Activated B cell treated with CpG ODN at 0.5 μM for 24 hours (primary cell): ENCODE measurements at regions of chr4 and their contacts with region 1.

Region 1: GRCh38 chr4:83012687-83013419 is 2.2 kb upstream of the LIN54 start:
- DNase-seq: peak; percentile 97
- ATAC-seq: peak; percentile 92
- H3K4me3 Mint-ChIP-seq: peak overlapping the region; percentile 94
- H3K27ac Mint-ChIP-seq: peak overlapping the region; percentile 92
- H3K4me1 Mint-ChIP-seq: peaks cover 44% of the 10 kb centered on the region
- H3K27me3 Mint-ChIP-seq: no peaks in the 10 kb centered on the region
- CTCF ChIP-seq: no peak

Region 2: GRCh38 chr4:82890901-82891706 is 121.7 kb before region 1 on chr4 and contains the start of gene SEC31A:
- CTCF ChIA-PET with region 1: interaction called, 3 read pairs
- POLR2A ChIA-PET with region 1: interaction called, 5 read pairs
- intact Hi-C with region 1: loop called (anchors 1 kb)
- DNase-seq: peak; percentile 97
- ATAC-seq: peak; percentile 92
- H3K4me3 Mint-ChIP-seq: peak within 1 kb of the TSS; percentile 93
- H3K27ac Mint-ChIP-seq: peak within 1 kb of the TSS; percentile 94
- H3K4me1 Mint-ChIP-seq: peaks cover 34% of the 10 kb centered on the region
- H3K27me3 Mint-ChIP-seq: no peaks in the 10 kb centered on the region
- CTCF ChIP-seq: no peak
- total RNA-seq, gene SEC31A: 154 and 172 TPM in 2 replicates

Region 3: DNA sequence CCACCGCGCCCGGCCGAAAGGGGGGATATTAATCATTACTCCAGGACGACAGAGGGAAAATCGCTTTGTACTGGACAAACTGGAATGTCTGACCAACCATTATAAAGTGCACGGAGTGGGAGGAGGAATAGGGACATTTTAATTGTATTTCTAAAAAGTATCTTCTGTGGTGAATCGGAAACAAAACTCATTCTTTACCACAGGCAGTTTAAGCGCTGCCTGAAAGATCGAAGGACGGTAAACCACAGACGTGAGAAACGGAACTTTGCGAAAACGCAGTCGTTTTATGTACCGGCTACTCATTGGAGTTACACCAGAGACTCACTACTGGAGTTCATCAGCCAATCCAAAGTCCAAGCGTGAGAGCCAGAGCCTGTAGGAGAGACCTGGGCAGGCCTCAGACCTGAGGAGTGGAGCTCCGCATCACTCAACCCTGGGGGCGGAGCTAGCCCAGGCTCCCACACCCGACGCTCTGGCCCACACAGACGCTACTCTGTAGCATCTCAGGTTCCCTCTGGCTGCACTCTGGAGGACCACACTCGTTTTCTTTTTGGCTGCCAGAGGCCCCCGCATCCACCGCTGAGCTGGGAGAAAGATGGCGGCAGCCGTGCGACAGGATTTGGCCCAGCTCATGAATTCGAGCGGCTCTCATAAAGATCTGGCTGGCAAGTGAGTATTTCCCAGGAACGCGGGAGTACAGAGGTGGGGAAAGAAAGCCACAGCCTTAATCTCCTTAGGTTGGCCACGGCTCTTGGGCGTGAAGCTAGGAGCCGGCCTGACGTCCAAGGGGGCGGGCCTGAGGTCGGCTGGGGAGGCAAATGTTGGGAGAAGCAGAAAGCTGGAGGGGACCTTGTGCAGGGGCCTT is 22.0 kb after region 1 on chr4 and contains the start of gene COPS4:
- CTCF ChIA-PET with region 1: interaction called, 6 read pairs
- POLR2A ChIA-PET with region 1: interaction called, 63 read pairs
- intact Hi-C with region 1: loop called (anchors 1 kb)
- DNase-seq: peak; percentile 82
- ATAC-seq: peak; percentile 96
- H3K4me3 Mint-ChIP-seq: peak within 1 kb of the TSS; percentile 99
- H3K27ac Mint-ChIP-seq: peak within 1 kb of the TSS; percentile 100
- H3K4me1 Mint-ChIP-seq: peaks cover 31% of the 10 kb centered on the region
- H3K27me3 Mint-ChIP-seq: no peaks in the 10 kb centered on the region
- CTCF ChIP-seq: no peak
- total RNA-seq, gene COPS4: 32.7 and 36.7 TPM in 2 replicates

Region 4: DNA sequence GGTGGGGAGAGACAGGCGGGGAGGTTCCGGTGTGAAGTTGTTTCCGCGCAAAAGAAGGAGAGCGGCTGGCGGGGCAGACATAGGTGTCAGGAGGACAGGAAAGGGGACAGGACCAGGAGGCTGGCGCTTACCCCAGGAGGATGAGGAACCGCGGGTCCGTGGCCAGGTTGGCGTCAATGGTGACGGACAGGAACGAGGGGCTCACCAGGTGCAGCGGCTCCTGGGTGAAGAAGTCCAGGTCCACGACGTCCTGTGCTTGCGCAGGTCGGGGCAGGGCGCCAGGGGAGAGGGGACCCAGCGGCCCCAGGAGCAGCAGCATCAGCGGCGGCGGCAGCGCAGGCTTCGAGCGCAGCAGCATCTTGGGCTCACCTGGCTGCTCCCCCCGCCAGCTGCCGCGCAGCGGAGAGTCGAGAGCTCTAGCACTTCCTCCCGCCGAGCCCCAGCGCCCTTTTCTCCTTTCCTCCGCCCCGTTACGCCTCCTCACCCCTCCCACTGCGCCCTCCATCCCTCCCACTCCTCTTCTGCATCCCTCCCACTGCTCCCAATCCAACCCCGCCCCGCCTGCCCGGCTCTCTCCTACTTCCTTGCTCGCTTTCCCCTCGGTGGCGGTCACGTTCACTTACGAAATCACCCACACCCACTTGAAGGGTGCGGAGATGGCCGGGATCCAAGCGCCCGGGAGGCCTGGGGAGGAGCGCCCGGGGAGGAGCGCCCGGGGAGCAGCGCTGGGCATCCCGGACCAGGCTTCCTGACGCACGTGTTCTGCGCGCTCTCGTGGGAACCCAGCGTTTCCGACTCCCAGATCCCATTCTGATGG is 321.8 kb after region 1 on chr4 and contains the start of gene HPSE:
- CTCF ChIA-PET with region 1: no interaction called
- POLR2A ChIA-PET with region 1: no interaction called
- intact Hi-C with region 1: loop called (anchors 1 kb)
- DNase-seq: peak; percentile 58
- ATAC-seq: peak; percentile 94
- H3K4me3 Mint-ChIP-seq: peak within 1 kb of the TSS; percentile 83
- H3K27ac Mint-ChIP-seq: peak within 1 kb of the TSS; percentile 59
- H3K4me1 Mint-ChIP-seq: peaks cover 8% of the 10 kb centered on the region
- H3K27me3 Mint-ChIP-seq: no peaks in the 10 kb centered on the region
- CTCF ChIP-seq: no peak
- total RNA-seq, gene HPSE: 1.5 TPM in 2 replicates

Region 5: DNA sequence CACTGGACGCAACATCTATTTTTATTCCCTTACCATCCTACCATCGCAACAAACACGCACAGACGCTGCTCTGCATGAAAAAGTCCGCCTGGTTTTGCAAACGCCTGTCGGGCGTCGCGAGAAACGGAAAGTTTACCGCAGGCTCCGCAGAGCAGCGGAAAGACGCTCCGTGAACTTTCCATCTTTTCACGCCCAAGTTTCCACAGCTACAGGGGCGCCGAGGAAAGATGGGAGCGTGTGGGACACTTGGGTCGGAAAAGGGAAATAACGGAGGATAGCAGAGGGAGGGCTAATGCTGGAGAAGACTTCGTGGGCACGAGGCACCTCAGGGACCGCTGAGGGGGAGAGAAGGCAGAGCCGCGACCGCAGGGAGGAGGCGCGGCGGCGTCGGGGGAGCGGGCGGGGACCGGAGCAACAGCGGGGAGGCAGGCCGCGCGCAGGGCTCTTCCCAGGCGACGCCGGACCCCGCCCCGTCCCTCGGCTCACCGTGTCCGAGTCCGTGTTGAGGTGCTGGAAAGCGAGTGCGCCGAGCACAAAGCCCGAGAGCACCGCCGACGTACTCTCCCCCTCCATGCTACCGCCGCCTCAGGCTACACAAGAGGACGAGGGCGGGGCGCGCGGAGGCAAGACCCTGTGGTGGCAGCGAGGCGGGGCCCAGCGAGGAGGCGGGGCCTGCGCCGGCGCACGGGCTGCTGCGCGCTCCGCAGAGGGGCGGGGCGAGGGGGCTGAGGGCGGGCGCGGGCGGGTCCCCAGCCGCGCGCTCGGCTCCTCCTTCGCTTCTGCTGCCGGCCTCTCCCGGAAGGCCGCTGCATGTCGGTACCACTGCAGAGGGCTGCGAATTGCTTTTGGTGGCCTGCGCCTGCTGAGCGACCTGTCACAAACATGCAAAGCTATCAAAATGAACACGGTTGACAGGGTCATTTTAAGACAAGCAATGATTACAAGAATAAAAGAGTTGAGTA is 471.9 kb after region 1 on chr4 and contains the start of gene ABRAXAS1:
- CTCF ChIA-PET with region 1: no interaction called
- POLR2A ChIA-PET with region 1: no interaction called
- intact Hi-C with region 1: loop called (anchors 1 kb)
- DNase-seq: peak; percentile 96
- ATAC-seq: peak; percentile 97
- H3K4me3 Mint-ChIP-seq: peak within 1 kb of the TSS; percentile 93
- H3K27ac Mint-ChIP-seq: peak within 1 kb of the TSS; percentile 94
- H3K4me1 Mint-ChIP-seq: peaks cover 19% of the 10 kb centered on the region
- H3K27me3 Mint-ChIP-seq: no peaks in the 10 kb centered on the region
- CTCF ChIP-seq: no peak
- total RNA-seq, gene ABRAXAS1: 23.5 and 24.2 TPM in 2 replicates